ENCODE measurements at regions of chr9 and their contacts with region 1.

Region 1: DNA sequence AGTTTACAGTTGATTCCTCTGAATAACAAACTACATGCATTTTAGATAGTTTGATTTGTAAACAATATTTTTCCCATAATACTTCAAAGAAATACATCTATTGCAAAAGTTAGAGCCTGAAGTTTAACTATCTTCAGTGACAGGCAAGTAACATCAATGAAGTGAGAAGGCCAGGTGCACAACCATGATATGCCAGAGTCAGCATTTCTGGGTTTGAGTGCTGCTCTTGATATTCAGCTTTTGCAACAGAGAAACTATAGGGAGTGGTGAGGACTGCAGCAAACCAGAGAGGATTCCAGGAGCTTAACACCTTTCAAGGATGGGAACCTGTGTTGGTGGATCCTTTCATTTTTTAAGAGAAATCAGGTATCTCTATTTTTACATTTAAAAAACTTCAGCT is 79.4 kb upstream of the RASEF start:
- DNase-seq: no peak
- H3K4me3 ChIP-seq: no peak overlapping the region
- H3K27ac ChIP-seq: no peak overlapping the region
- H3K4me1 ChIP-seq: no peaks in the 10 kb centered on the region
- H3K27me3 ChIP-seq: no peaks in the 10 kb centered on the region
- CTCF ChIP-seq: no peak

Region 2: GRCh38 chr9:83125671-83126070 is 16.7 kb before region 1 on chr9:
- intact Hi-C with region 1: loop called (anchors 2 kb)
- DNase-seq: no peak
- H3K4me3 ChIP-seq: no peak overlapping the region
- H3K27ac ChIP-seq: no peak overlapping the region
- H3K4me1 ChIP-seq: no peaks in the 10 kb centered on the region
- H3K27me3 ChIP-seq: no peaks in the 10 kb centered on the region
- CTCF ChIP-seq: no peak

Region 3: DNA sequence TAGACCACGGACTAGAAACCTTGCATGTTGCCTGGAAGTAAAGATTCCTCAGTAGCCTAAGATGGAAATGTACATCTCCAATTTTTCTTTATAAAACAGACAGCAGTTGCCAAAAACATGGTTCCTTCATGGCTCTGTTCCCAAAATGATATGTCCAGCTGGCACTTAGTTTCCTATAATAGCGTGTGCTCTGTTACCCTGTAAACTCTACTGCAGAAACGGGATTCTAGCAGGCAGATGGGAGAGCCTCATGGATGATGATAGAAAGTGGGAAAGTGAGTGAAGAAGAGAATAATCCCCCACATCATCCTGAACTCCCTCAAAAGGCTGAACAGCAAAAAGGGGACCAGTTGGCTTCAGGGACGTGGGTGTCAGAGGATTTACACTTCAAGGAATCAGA is 277.6 kb after region 1 on chr9:
- intact Hi-C with region 1: no loop called
- DNase-seq: no peak
- H3K4me3 ChIP-seq: no peak overlapping the region
- H3K27ac ChIP-seq: no peak overlapping the region
- H3K4me1 ChIP-seq: no peaks in the 10 kb centered on the region
- H3K27me3 ChIP-seq: no peaks in the 10 kb centered on the region
- CTCF ChIP-seq: no peak